CD4-positive, alpha-beta T cell (primary cell): ENCODE measurements at regions of chr9 and their contacts with region 1.

Region 1: GRCh38 chr9:127955294-127956035 is 17.8 kb upstream of the DPM2 start:
- DNase-seq: peak; percentile 63 to 91 (median 78)
- ATAC-seq: peak; percentile 86
- H3K4me3 ChIP-seq: peak overlapping the region; percentile 4
- H3K4me3 Mint-ChIP-seq: peak overlapping the region; percentile 78
- H3K27ac ChIP-seq: peak overlapping the region; percentile 53 to 65
- H3K27ac Mint-ChIP-seq: peak overlapping the region; percentile 97
- H3K4me1 ChIP-seq: peaks cover 84% of the 10 kb centered on the region
- H3K4me1 Mint-ChIP-seq: peaks cover 93% of the 10 kb centered on the region
- H3K27me3 ChIP-seq: no peaks in the 10 kb centered on the region
- H3K27me3 Mint-ChIP-seq: no peaks in the 10 kb centered on the region
- CTCF ChIP-seq: peak; percentile 71

Region 2: GRCh38 chr9:127937388-127938280 is 17.8 kb before region 1 on chr9 and contains the start of gene DPM2:
- CTCF ChIA-PET with region 1: interaction called, 74 read pairs
- POLR2A ChIA-PET with region 1: interaction called, 28 read pairs
- intact Hi-C with region 1: loop called in 1 of 2 experiments (anchors 1 kb)
- DNase-seq: peak; percentile 74 to 94 (median 84)
- ATAC-seq: peak; percentile 85
- H3K4me3 ChIP-seq: peak within 1 kb of the TSS; percentile 90
- H3K4me3 Mint-ChIP-seq: peak within 1 kb of the TSS; percentile 93
- H3K27ac ChIP-seq: peak within 1 kb of the TSS; percentile 48 to 80
- H3K27ac Mint-ChIP-seq: peak within 1 kb of the TSS; percentile 88
- H3K4me1 ChIP-seq: peaks cover 47% of the 10 kb centered on the region
- H3K4me1 Mint-ChIP-seq: peaks cover 63% of the 10 kb centered on the region
- H3K27me3 ChIP-seq: no peaks in the 10 kb centered on the region
- H3K27me3 Mint-ChIP-seq: no peaks in the 10 kb centered on the region
- CTCF ChIP-seq: no peak
- total RNA-seq, gene DPM2: 41.7 to 47.6 TPM

Region 3: DNA sequence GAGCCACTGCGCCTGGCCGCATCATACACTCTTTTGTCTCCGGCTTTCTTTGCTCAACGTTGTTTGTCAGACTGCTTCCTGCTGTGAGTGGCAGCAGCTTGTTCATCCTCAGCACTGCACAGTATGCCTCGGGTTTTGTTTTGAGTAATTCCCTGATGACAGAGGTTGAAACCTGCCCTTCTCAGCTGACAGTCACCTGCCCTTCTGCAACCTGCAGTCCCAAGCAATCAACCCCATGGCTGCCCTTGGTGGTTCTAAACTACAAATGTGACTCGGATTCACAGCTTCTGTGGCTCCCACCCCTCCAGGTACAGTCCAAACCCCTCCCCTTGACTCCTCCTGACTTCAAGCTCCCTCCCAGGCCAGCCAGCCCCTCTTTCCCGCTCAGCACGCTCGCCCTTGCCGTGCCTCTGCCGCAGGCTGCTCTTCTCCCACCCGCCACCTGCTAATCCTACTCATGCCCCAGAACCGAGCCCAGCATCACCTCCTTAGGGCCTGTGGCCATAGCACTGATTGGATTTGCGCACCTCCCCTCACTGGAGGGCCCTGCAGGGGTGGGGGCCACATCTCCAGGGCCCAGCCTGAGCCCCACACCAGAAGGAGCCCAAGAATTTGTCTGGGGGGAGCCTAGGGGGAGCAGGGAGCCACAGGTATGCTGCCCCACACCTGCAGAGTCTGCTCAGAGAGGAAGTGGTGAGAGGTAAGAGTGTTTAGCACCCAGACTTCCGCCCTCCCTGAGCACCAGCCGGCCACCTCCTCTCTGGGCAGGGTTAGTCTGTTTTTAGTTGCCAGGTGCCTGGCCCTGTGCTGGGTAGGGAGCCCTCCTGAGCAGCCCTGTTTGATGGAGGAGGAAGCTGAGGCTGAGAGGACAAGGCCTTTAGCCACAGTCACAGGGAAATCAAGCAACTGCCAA is 15.2 kb after region 1 on chr9:
- CTCF ChIA-PET with region 1: interaction called, 17 read pairs
- POLR2A ChIA-PET with region 1: interaction called, 272 read pairs
- intact Hi-C with region 1: loop called in 1 of 2 experiments (anchors 1 kb)
- DNase-seq: peak; percentile 50 to 85 (median 70)
- ATAC-seq: peak; percentile 69
- H3K4me3 ChIP-seq: peak overlapping the region; percentile 67
- H3K4me3 Mint-ChIP-seq: peak overlapping the region; percentile 91
- H3K27ac ChIP-seq: peak overlapping the region; percentile 60 to 96
- H3K27ac Mint-ChIP-seq: peak overlapping the region; percentile 97
- H3K4me1 ChIP-seq: peaks cover 100% of the 10 kb centered on the region
- H3K4me1 Mint-ChIP-seq: peaks cover 100% of the 10 kb centered on the region
- H3K27me3 ChIP-seq: no peaks in the 10 kb centered on the region
- H3K27me3 Mint-ChIP-seq: no peaks in the 10 kb centered on the region
- CTCF ChIP-seq: no peak

Region 4: DNA sequence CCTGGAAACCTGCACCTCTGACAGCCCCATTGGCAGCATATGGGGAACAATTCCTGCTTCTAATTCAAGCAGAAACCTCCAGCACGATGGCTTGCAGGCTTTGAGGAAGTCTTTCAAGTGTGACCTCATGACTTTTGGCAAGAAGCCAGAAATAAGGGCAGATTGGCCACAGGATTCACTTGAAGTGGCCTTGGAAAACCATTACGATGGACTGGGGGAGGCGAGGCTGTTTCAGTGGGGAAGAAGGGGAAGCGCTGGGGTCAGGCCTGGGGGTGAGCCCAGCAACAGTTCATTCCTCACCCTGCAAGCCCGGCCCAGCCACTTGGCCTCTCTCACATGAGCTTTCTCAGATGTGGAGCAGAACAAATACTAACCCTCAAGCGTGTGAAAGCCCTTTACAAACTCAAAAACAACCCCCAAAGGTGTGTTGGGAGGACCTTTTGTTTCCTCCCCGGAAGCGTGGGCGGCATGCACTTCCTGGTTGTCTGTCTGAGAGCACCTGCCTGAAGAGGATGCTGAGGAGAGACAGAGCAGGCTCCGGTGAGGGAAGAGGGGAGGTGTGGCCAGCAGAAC is 52.2 kb after region 1 on chr9:
- CTCF ChIA-PET with region 1: interaction called, 14 read pairs
- POLR2A ChIA-PET with region 1: interaction called, 6 read pairs
- intact Hi-C with region 1: no loop called
- DNase-seq: peak; percentile 82 to 97 (median 91)
- ATAC-seq: peak; percentile 87
- H3K4me3 ChIP-seq: peak overlapping the region; percentile 37
- H3K4me3 Mint-ChIP-seq: peak overlapping the region; percentile 76
- H3K27ac ChIP-seq: peak overlapping the region; percentile 65 to 97
- H3K27ac Mint-ChIP-seq: peak overlapping the region; percentile 96
- H3K4me1 ChIP-seq: peaks cover 89% of the 10 kb centered on the region
- H3K4me1 Mint-ChIP-seq: peaks cover 81% of the 10 kb centered on the region
- H3K27me3 ChIP-seq: no peaks in the 10 kb centered on the region
- H3K27me3 Mint-ChIP-seq: no peaks in the 10 kb centered on the region
- CTCF ChIP-seq: no peak

Region 5: GRCh38 chr9:128034821-128035764 is 79.6 kb after region 1 on chr9:
- CTCF ChIA-PET with region 1: interaction called, 71 read pairs
- POLR2A ChIA-PET with region 1: interaction called, 1,020 read pairs
- intact Hi-C with region 1: loop called (anchors 1 kb)
- DNase-seq: peak; percentile 45 to 90 (median 58)
- ATAC-seq: peak; percentile 42
- H3K4me3 ChIP-seq: no peak overlapping the region
- H3K4me3 Mint-ChIP-seq: peak overlapping the region; percentile 70
- H3K27ac ChIP-seq: peak overlapping the region in 1 of 2 donors; percentile 61
- H3K27ac Mint-ChIP-seq: peak overlapping the region; percentile 78
- H3K4me1 ChIP-seq: peaks cover 54% of the 10 kb centered on the region
- H3K4me1 Mint-ChIP-seq: peaks cover 42% of the 10 kb centered on the region
- H3K27me3 ChIP-seq: no peaks in the 10 kb centered on the region
- H3K27me3 Mint-ChIP-seq: no peaks in the 10 kb centered on the region
- CTCF ChIP-seq: peak; percentile 90

Region 6: GRCh38 chr9:128103589-128103962 is 148.1 kb after region 1 on chr9:
- CTCF ChIA-PET with region 1: interaction called, 3 read pairs
- POLR2A ChIA-PET with region 1: no interaction called
- intact Hi-C with region 1: loop called in 1 of 2 experiments (anchors 5 kb)
- DNase-seq: peak in 12 of 14 experiments; percentile 21 to 69 (median 44)
- ATAC-seq: peak; percentile 78
- H3K4me3 ChIP-seq: no peak overlapping the region
- H3K4me3 Mint-ChIP-seq: no peak overlapping the region
- H3K27ac ChIP-seq: peak overlapping the region in 1 of 2 donors; percentile 23
- H3K27ac Mint-ChIP-seq: peak overlapping the region; percentile 74
- H3K4me1 ChIP-seq: peaks cover 56% of the 10 kb centered on the region
- H3K4me1 Mint-ChIP-seq: peaks cover 44% of the 10 kb centered on the region
- H3K27me3 ChIP-seq: no peaks in the 10 kb centered on the region
- H3K27me3 Mint-ChIP-seq: no peaks in the 10 kb centered on the region
- CTCF ChIP-seq: peak; percentile 56

Region 7: GRCh38 chr9:128244837-128245231 is 289.4 kb after region 1 on chr9:
- CTCF ChIA-PET with region 1: no interaction called
- POLR2A ChIA-PET with region 1: no interaction called
- intact Hi-C with region 1: no loop called
- DNase-seq: peak in 2 of 14 experiments; percentile 10 to 34
- ATAC-seq: no peak
- H3K4me3 ChIP-seq: no peak overlapping the region
- H3K4me3 Mint-ChIP-seq: no peak overlapping the region
- H3K27ac ChIP-seq: no peak overlapping the region
- H3K27ac Mint-ChIP-seq: no peak overlapping the region
- H3K4me1 ChIP-seq: peaks cover 6% of the 10 kb centered on the region
- H3K4me1 Mint-ChIP-seq: peaks cover 4% of the 10 kb centered on the region
- H3K27me3 ChIP-seq: peaks cover 11 to 20% of the 10 kb centered on the region in 2 experiments
- H3K27me3 Mint-ChIP-seq: peaks cover 38% of the 10 kb centered on the region
- CTCF ChIP-seq: no peak